ENCODE measurements at regions of chr10 and their contacts with region 1.

Region 1: DNA sequence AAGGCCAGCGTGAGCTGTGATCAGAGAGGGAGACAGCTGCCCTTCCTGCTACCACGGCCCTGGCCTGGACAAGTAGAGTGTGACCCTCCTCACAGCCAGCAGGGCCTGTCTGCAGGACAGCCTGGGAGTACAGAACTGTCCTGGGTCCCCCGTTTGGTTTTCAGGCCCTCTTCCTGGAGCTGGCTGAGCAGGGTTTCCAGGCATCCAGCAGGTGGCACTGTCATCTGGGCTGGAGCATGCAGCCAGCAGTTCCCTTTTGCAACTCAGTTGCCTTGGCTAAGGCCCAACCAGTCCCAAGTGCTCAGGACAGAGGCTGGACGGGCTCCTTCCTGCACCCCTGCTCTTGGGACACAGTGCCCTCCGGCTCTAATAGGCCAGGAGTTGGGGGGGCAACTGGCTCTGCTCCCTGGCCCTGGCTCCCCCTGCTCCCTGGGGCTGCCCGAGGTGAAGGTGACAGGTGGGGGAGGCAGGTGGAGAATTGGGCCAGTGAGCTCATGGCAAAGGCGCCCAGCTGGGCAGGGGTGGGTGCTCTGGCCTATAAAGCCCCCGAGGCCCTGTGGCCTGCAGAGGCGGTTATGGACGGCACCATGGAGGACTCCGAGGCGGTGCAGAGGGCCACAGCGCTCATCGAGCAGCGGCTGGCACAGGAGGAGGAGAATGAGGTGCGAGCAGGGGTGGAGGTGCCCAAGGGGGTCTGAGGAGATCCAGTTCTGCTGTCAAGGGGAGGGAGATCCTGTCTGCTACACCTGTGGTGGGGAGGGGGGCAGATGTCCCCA is at the start of gene ANKRD2:
- DNase-seq: peak; percentile 65
- H3K4me3 Mint-ChIP-seq: no peak within 1 kb of the TSS
- H3K27ac Mint-ChIP-seq: no peak within 1 kb of the TSS
- H3K4me1 Mint-ChIP-seq: no peaks in the 10 kb centered on the region
- H3K27me3 Mint-ChIP-seq: no peaks in the 10 kb centered on the region
- total RNA-seq, gene ANKRD2: 0.15 TPM in 1 of 2 experiments, not detected in the other

Region 2: GRCh38 chr10:97307866-97308780 is 264.3 kb before region 1 on chr10:
- CTCF ChIA-PET with region 1: no interaction called
- POLR2A ChIA-PET with region 1: no interaction called
- DNase-seq: no peak
- H3K4me3 Mint-ChIP-seq: no peak overlapping the region
- H3K27ac Mint-ChIP-seq: no peak overlapping the region
- H3K4me1 Mint-ChIP-seq: no peaks in the 10 kb centered on the region
- H3K27me3 Mint-ChIP-seq: peaks cover 7% of the 10 kb centered on the region

Region 3: GRCh38 chr10:97553575-97554031 is 18.8 kb before region 1 on chr10:
- CTCF ChIA-PET with region 1: interaction called, 19 read pairs
- POLR2A ChIA-PET with region 1: no interaction called
- DNase-seq: peak; percentile 66
- H3K4me3 Mint-ChIP-seq: no peak overlapping the region
- H3K27ac Mint-ChIP-seq: no peak overlapping the region
- H3K4me1 Mint-ChIP-seq: peaks cover 2% of the 10 kb centered on the region
- H3K27me3 Mint-ChIP-seq: no peaks in the 10 kb centered on the region

Region 4: DNA sequence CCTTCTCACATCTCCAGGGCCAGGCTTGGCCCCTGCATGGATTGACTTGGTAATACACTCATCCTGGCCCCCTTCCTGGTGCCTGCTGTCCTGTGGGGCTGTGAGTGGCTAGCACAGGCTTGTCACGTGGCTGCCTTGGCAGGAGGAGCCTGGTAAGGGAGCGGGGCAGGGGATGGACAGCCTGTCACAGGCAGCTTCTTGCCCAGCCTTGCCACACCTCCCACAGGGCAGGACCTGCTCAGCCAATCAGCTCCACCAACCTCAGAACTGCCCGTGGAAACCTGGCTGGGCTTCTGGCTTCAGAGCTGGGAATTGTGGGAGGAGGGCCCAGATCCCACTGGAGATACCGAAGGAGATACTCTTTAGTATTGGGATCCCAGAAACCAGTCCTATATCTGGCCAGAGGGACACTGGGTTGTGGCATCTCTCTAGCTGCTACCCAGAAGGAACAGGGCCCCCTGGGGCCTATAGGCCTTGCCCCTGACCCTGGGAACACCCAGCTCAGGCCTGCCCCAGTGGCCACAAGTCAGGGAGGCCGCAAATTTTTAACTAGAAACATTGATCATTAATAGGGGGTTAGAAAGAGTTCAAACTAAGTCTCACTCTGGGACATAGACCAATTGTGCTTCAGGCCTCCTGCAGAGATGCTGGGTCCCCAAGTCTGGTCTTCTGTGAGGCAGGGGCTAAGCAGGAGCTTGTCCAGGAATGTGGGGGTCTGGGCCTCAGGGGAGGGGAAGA is 11.8 kb after region 1 on chr10 and contains the start of gene HOGA1:
- CTCF ChIA-PET with region 1: interaction called, 15 read pairs
- POLR2A ChIA-PET with region 1: interaction called, 3 read pairs
- DNase-seq: no peak
- H3K4me3 Mint-ChIP-seq: no peak within 1 kb of the TSS
- H3K27ac Mint-ChIP-seq: no peak within 1 kb of the TSS
- H3K4me1 Mint-ChIP-seq: peaks cover 1% of the 10 kb centered on the region
- H3K27me3 Mint-ChIP-seq: peaks cover 2% of the 10 kb centered on the region
- total RNA-seq, gene HOGA1: not detected

Region 5: GRCh38 chr10:97597778-97598177 is 25.4 kb after region 1 on chr10:
- CTCF ChIA-PET with region 1: interaction called, 10 read pairs
- POLR2A ChIA-PET with region 1: no interaction called
- DNase-seq: no peak
- H3K4me3 Mint-ChIP-seq: no peak overlapping the region
- H3K27ac Mint-ChIP-seq: no peak overlapping the region
- H3K4me1 Mint-ChIP-seq: no peaks in the 10 kb centered on the region
- H3K27me3 Mint-ChIP-seq: no peaks in the 10 kb centered on the region

Region 6: GRCh38 chr10:97612386-97612785 is 40.0 kb after region 1 on chr10:
- CTCF ChIA-PET with region 1: interaction called, 14 read pairs
- POLR2A ChIA-PET with region 1: interaction called, 3 read pairs
- DNase-seq: no peak
- H3K4me3 Mint-ChIP-seq: no peak overlapping the region
- H3K27ac Mint-ChIP-seq: no peak overlapping the region
- H3K4me1 Mint-ChIP-seq: no peaks in the 10 kb centered on the region
- H3K27me3 Mint-ChIP-seq: no peaks in the 10 kb centered on the region